A673 (cell line): ENCODE measurements at regions of chr2 and their contacts with region 1.

Region 1: GRCh38 chr2:181052523-181052891 is 72.1 kb downstream of the UBE2E3 start:
- DNase-seq: no peak
- H3K4me3 ChIP-seq: no peak overlapping the region
- H3K27ac ChIP-seq: no peak overlapping the region
- H3K4me1 ChIP-seq: peaks cover 9% of the 10 kb centered on the region
- H3K27me3 ChIP-seq: no peaks in the 10 kb centered on the region
- CTCF ChIP-seq: no peak

Region 2: GRCh38 chr2:180980106-180980942 is 72.2 kb before region 1 on chr2 and contains the start of gene UBE2E3:
- CTCF ChIA-PET with region 1: no interaction called
- POLR2A ChIA-PET with region 1: no interaction called
- intact Hi-C with region 1: loop called (anchors 5 kb)
- DNase-seq: peak; percentile 88
- H3K4me3 ChIP-seq: peak within 1 kb of the TSS; percentile 68
- H3K27ac ChIP-seq: peak within 1 kb of the TSS; percentile 78
- H3K4me1 ChIP-seq: peaks cover 22% of the 10 kb centered on the region
- H3K27me3 ChIP-seq: no peaks in the 10 kb centered on the region
- CTCF ChIP-seq: peak; percentile 66
- total RNA-seq, gene UBE2E3: 93.1 and 103 TPM in 2 replicates

Region 3: DNA sequence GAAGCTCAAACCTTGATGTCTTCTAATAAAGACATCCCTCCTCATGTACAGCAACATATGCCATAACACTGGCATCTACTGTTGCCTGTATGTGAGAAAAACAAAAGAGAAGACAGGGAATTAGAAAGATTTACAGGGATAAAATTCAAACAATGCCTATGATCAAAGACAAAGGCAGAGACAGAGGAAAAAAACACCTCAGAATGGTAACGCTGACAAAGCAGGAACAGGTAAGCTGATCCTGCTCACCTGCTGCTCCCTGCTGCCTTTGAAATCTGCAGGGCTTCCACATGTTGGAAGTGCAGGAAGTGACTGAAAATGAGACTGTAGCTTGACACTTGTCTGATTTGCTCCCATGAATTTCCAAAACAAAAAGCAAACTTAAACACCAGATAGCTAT is 1573.3 kb after region 1 on chr2:
- CTCF ChIA-PET with region 1: no interaction called
- POLR2A ChIA-PET with region 1: no interaction called
- intact Hi-C with region 1: no loop called
- DNase-seq: no peak
- H3K4me3 ChIP-seq: no peak overlapping the region
- H3K27ac ChIP-seq: no peak overlapping the region
- H3K4me1 ChIP-seq: peaks cover 8% of the 10 kb centered on the region
- H3K27me3 ChIP-seq: no peaks in the 10 kb centered on the region
- CTCF ChIP-seq: no peak